IMR-90 (cell line): ENCODE measurements at regions of chr11 and their contacts with region 1.

Region 1: GRCh38 chr11:44538375-44539054 is 26.9 kb upstream of the CD82 start:
- DNase-seq: peak; percentile 56
- ATAC-seq: peak; percentile 100
- H3K4me3 ChIP-seq: no peak overlapping the region
- H3K27ac ChIP-seq: no peak overlapping the region
- H3K4me1 ChIP-seq: no peaks in the 10 kb centered on the region
- H3K27me3 ChIP-seq: peaks cover 32% of the 10 kb centered on the region
- CTCF ChIP-seq: peak; percentile 98
- POLR2A ChIP-seq: peak; percentile 42; the same call in 1 of the 2 replicates
- RAD21 ChIP-seq: peak; percentile 98

Region 2: GRCh38 chr11:44095506-44096394 is 442.8 kb before region 1 on chr11 and contains the start of gene EXT2:
- CTCF ChIA-PET with region 1: interaction called, 3 read pairs
- POLR2A ChIA-PET with region 1: no interaction called
- dilution Hi-C with region 1: no loop called
- in situ Hi-C with region 1: no loop called
- intact Hi-C with region 1: loop called (anchors 1 kb)
- DNase-seq: peak; percentile 76
- ATAC-seq: peak; percentile 95
- H3K4me3 ChIP-seq: peak within 1 kb of the TSS; percentile 97
- H3K27ac ChIP-seq: peak within 1 kb of the TSS; percentile 72
- H3K4me1 ChIP-seq: 0 out of 2 replicates have a peak, but pooled peaks cover 3% of the 10 kb centered on the region
- H3K27me3 ChIP-seq: peaks cover 2% of the 10 kb centered on the region; the same call in 1 of the 2 replicates
- CTCF ChIP-seq: peak; percentile 93
- POLR2A ChIP-seq: no peak
- RAD21 ChIP-seq: peak; percentile 20; the same call in 1 of the 2 replicates
- total RNA-seq, gene EXT2: 66.1 and 85.3 TPM in 2 replicates

Region 3: GRCh38 chr11:44110231-44110679 is 428.3 kb before region 1 on chr11:
- CTCF ChIA-PET with region 1: no interaction called
- POLR2A ChIA-PET with region 1: no interaction called
- dilution Hi-C with region 1: no loop called
- in situ Hi-C with region 1: no loop called
- intact Hi-C with region 1: loop called (anchors 1 kb)
- DNase-seq: peak; percentile 40
- ATAC-seq: peak; percentile 86
- H3K4me3 ChIP-seq: no peak overlapping the region
- H3K27ac ChIP-seq: no peak overlapping the region
- H3K4me1 ChIP-seq: no peaks in the 10 kb centered on the region
- H3K27me3 ChIP-seq: no peaks in the 10 kb centered on the region
- CTCF ChIP-seq: peak; percentile 75
- POLR2A ChIP-seq: no peak
- RAD21 ChIP-seq: peak; percentile 79

Region 4: DNA sequence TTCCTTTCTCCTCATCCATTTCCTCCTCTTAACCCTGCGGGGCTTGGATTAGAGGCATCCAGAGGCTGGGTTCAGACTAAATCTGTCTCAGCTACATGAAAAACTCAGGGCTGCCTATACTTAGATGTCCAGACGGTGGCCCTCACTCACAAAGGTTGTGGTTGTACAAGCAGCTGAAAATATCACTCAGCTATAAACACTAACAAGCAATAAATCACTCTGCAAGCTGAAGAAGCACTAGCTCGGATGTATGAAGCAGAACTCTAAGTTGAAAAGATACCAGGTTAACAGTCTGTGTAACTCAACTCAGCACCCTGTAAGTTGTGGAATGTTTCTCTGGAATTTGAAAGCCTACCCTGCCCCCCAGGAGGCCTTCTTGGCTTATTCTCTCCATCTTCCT is 360.1 kb before region 1 on chr11:
- CTCF ChIA-PET with region 1: no interaction called
- POLR2A ChIA-PET with region 1: no interaction called
- dilution Hi-C with region 1: no loop called
- in situ Hi-C with region 1: no loop called
- intact Hi-C with region 1: loop called (anchors 5 kb)
- DNase-seq: peak; percentile 61
- ATAC-seq: peak; percentile 92
- H3K4me3 ChIP-seq: no peak overlapping the region
- H3K27ac ChIP-seq: no peak overlapping the region
- H3K4me1 ChIP-seq: peaks cover 8% of the 10 kb centered on the region
- H3K27me3 ChIP-seq: no peaks in the 10 kb centered on the region
- CTCF ChIP-seq: peak; percentile 40
- POLR2A ChIP-seq: no peak
- RAD21 ChIP-seq: peak; percentile 32

Region 5: GRCh38 chr11:44785856-44786606 is 247.5 kb after region 1 on chr11:
- CTCF ChIA-PET with region 1: no interaction called
- POLR2A ChIA-PET with region 1: no interaction called
- dilution Hi-C with region 1: no loop called
- in situ Hi-C with region 1: no loop called
- intact Hi-C with region 1: no loop called
- DNase-seq: no peak
- ATAC-seq: peak; percentile 29; the same call in 1 of the 2 replicates
- H3K4me3 ChIP-seq: no peak overlapping the region
- H3K27ac ChIP-seq: no peak overlapping the region
- H3K4me1 ChIP-seq: peaks cover 4% of the 10 kb centered on the region; the same call in 1 of the 2 replicates
- H3K27me3 ChIP-seq: peaks cover 20% of the 10 kb centered on the region
- CTCF ChIP-seq: 0 out of 2 replicates have a peak, but pooled peaks have one; percentile 18
- POLR2A ChIP-seq: no peak
- RAD21 ChIP-seq: no peak